Activated B cell treated with CpG ODN at 0.5 μM for 24 hours (primary cell): ENCODE measurements at regions of chr12 and their contacts with region 1.

Region 1: DNA sequence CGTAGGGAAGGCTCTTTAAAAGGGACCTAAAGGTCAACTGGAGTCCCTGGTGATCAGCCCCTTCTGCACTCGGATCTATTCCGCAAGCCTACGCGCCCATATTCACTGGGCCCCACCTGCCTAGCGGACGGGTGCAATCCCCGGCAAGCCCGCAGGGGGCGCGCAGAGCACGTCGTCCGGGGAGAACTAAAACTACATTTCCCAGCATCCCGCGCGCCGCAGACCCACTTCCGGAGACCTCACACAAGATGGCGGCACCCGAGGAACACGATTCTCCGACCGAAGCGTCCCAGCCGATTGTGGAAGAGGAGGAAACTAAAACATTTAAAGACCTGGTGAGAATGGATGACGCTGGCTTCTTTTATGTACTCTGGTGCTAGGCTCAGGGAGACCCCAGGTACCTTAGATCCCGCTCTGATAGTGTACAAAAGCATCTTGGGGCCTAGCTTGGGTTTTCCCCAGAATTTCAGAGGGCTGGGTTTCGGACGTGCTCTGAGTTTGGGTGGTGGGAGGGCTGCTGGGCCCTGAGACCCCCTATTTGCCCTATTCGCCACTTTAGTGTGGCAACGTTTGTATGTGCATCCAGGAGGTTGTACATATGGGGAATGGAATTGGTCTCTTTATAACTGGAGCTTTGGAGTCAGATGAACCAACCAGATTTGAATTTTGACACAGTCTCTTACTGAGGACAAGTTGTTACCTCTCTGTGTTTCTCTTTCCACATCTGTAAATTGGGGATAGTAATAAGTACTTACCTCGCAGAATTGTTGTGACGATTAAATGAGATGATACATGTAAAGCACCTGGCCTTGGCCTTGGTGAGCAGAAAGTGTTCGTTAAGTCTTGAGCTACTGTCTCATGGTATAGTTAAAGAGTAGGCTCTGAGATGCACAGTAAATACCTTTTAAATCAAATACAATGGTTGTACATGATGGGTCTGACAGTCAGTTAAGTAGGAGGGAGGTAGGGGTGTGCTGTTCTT is at the start of gene DDX47:
- DNase-seq: peak; percentile 98
- ATAC-seq: peak; percentile 81
- H3K4me3 Mint-ChIP-seq: peak within 1 kb of the TSS; percentile 96
- H3K27ac Mint-ChIP-seq: peak within 1 kb of the TSS; percentile 93
- H3K4me1 Mint-ChIP-seq: peaks cover 69% of the 10 kb centered on the region
- H3K27me3 Mint-ChIP-seq: no peaks in the 10 kb centered on the region
- CTCF ChIP-seq: peak; percentile 87
- total RNA-seq, gene DDX47: 97.1 and 98.5 TPM in 2 replicates

Region 2: GRCh38 chr12:12803186-12803585 is 10.2 kb before region 1 on chr12:
- CTCF ChIA-PET with region 1: interaction called, 4 read pairs
- POLR2A ChIA-PET with region 1: interaction called, 19 read pairs
- intact Hi-C with region 1: loop called (anchors 1 kb)
- DNase-seq: no peak
- ATAC-seq: peak; percentile 70
- H3K4me3 Mint-ChIP-seq: peak overlapping the region; percentile 12
- H3K27ac Mint-ChIP-seq: peak overlapping the region; percentile 6
- H3K4me1 Mint-ChIP-seq: peaks cover 65% of the 10 kb centered on the region
- H3K27me3 Mint-ChIP-seq: no peaks in the 10 kb centered on the region
- CTCF ChIP-seq: no peak

Region 3: GRCh38 chr12:12823811-12824210 is 10.4 kb after region 1 on chr12:
- CTCF ChIA-PET with region 1: no interaction called
- POLR2A ChIA-PET with region 1: interaction called, 3 read pairs
- intact Hi-C with region 1: loop called (anchors 1 kb)
- DNase-seq: no peak
- ATAC-seq: no peak
- H3K4me3 Mint-ChIP-seq: no peak overlapping the region
- H3K27ac Mint-ChIP-seq: no peak overlapping the region
- H3K4me1 Mint-ChIP-seq: peaks cover 16% of the 10 kb centered on the region
- H3K27me3 Mint-ChIP-seq: no peaks in the 10 kb centered on the region
- CTCF ChIP-seq: no peak

Region 4: DNA sequence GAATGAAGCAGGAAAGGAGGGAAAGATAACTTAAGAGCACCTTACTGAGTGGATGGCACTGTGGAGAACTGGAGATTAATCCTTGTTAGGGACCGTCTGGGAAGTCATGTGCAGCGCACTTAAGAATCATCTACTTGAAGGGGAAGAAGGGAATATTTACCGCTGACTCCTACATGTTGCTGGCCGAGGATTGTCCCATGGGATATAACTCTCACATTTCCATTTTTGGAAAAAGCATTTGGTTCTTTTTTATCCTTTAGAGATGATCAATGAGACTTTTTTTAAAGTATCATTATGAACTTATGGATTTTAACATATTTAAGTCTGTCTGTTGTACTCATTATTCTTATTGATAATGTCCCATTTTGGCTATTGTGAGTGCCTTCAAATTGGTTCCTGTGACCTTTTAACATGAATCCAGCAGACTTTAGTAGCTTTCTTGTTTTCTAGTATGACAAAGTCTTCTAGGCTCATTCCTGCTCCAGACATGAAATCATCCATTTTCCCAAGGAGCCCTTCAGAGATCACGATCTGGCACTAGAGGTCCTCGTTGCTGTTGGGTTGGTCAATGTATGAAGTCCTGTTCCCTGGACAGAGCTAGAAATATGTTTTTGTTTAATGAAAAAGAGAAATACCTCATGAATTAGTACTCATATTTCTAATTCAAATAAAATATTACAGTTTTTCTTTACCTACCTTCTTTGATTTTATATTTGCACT is 210.6 kb after region 1 on chr12:
- CTCF ChIA-PET with region 1: no interaction called
- POLR2A ChIA-PET with region 1: no interaction called
- intact Hi-C with region 1: no loop called
- DNase-seq: no peak
- ATAC-seq: no peak
- H3K4me3 Mint-ChIP-seq: no peak overlapping the region
- H3K27ac Mint-ChIP-seq: no peak overlapping the region
- H3K4me1 Mint-ChIP-seq: no peaks in the 10 kb centered on the region
- H3K27me3 Mint-ChIP-seq: peaks cover 26% of the 10 kb centered on the region
- CTCF ChIP-seq: no peak